Activated CD4-positive, alpha-beta memory T cell treated with anti-CD3 and anti-CD28 coated beads for 36 hours (primary cell): ENCODE measurements at regions of chr1 and their contacts with region 1.

Region 1: GRCh38 chr1:100351095-100351891 is 1.0 kb upstream of the CDC14A start:
- DNase-seq: peak; percentile 94
- H3K4me3 Mint-ChIP-seq: peak overlapping the region; percentile 98
- H3K27ac Mint-ChIP-seq: peak overlapping the region; percentile 97
- H3K4me1 Mint-ChIP-seq: peaks cover 30% of the 10 kb centered on the region
- H3K27me3 Mint-ChIP-seq: no peaks in the 10 kb centered on the region

Region 2: DNA sequence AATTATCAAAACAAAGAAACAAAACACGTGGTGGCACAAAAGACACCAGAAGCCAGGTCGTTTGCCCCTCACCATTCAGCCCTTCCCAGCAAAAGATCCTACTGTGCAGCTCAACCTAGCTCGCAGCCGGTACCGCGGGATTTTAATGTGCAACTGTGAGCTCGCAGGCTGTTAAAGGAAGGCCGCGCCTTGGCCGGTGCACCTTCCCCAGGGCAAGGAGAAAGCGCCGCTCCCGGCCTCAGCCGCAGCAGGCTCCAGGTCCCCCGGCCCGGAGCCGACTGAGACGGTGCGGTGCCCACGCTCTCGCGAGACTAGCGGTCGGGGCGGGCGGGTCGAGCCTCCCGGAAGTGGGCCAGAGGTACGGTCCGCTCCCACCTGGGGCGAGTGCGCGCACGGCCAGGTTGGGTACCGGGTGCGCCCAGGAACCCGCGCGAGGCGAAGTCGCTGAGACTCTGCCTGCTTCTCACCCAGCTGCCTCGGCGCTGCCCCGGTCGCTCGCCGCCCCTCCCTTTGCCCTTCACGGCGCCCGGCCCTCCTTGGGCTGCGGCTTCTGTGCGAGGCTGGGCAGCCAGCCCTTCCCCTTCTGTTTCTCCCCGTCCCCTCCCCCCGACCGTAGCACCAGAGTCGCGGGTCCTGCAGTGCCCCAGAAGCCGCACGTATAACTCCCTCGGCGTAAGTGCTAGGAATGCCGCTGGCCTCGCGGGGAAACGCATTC is 501.4 kb before region 1 on chr1 and contains the start of gene AGL:
- CTCF ChIA-PET with region 1: no interaction called
- POLR2A ChIA-PET with region 1: no interaction called
- intact Hi-C with region 1: loop called (anchors 10 kb)
- DNase-seq: peak; percentile 92
- H3K4me3 Mint-ChIP-seq: peak within 1 kb of the TSS; percentile 94
- H3K27ac Mint-ChIP-seq: peak within 1 kb of the TSS; percentile 82
- H3K4me1 Mint-ChIP-seq: peaks cover 27% of the 10 kb centered on the region
- H3K27me3 Mint-ChIP-seq: no peaks in the 10 kb centered on the region
- total RNA-seq, gene AGL: 19.0 to 19.7 TPM

Region 3: DNA sequence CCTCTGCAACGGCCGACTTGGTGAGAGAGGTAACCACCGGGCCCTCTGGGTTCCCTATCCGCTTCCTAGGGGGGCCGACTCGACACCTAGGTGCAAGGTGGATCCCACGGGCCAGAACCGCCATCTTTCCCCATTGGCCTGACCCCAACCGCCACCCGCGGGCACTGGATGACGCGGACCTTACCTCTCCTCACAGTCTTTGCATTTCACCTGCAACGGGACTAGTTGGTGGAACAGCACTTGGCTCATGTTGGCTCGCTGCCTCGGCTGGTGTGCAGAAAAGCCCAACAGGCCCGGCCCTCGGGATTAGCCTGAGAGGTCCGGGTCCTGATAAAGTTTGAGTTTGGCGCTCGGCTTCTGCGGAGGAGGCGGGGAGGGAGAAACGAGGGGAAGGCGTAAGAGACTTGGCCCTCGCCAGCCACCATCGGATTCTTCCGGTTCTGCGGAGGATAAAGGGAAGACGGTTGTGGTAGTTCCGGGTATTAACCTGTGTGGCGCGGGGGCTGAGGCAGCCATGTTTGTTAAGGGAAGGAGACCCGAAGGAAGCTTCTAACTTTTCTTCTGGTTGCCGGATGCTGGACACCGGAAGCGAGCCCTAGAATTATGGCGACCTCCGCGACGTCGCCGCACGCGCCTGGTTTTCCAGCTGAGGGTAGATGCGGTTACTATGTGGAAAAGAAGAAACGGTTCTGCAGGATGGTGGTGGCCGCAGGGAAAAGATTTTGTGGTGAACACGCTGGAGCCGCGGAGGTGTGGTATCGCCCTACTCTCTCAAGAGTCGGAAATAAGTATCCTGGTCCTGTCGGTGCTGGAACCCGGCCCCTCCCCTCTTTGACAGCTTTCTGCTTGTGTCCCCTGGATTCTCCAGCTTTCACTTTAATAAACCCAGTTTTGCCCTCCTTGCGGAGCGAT is 218.5 kb before region 1 on chr1 and contains the starts of genes SASS6 and TRMT13:
- CTCF ChIA-PET with region 1: no interaction called
- POLR2A ChIA-PET with region 1: no interaction called
- intact Hi-C with region 1: loop called (anchors 1 kb)
- DNase-seq: peak; percentile 97
- H3K4me3 Mint-ChIP-seq: peak within 1 kb of the TSS; percentile 96
- H3K27ac Mint-ChIP-seq: peak within 1 kb of the TSS; percentile 93
- H3K4me1 Mint-ChIP-seq: peaks cover 39% of the 10 kb centered on the region
- H3K27me3 Mint-ChIP-seq: no peaks in the 10 kb centered on the region
- total RNA-seq, gene SASS6: 11.5 to 12.0 TPM
- total RNA-seq, gene TRMT13: 17.5 TPM

Region 4: GRCh38 chr1:100306735-100307313 is 44.5 kb before region 1 on chr1:
- CTCF ChIA-PET with region 1: no interaction called
- POLR2A ChIA-PET with region 1: interaction called, 3 read pairs
- intact Hi-C with region 1: loop called (anchors 2 kb)
- DNase-seq: no peak
- H3K4me3 Mint-ChIP-seq: no peak overlapping the region
- H3K27ac Mint-ChIP-seq: no peak overlapping the region
- H3K4me1 Mint-ChIP-seq: peaks cover 20% of the 10 kb centered on the region
- H3K27me3 Mint-ChIP-seq: no peaks in the 10 kb centered on the region

Region 5: DNA sequence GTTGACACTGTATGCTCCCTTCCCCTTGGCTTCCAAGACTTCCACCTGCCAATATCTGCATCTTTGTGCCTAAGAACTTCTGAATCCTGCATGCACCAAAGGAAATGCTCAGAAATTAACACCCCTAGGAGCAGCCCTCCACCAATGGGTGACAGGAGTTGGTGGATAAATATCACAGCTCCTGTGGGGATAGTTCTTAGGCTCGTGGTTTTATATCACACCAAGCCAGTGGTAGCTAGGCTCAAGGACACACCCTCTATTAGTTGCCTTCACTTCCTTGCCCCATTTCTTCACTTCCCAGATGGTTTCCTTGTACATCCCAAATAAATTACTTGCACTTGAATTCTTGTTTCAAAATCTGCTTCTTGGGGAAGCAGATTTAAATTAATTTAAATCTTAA is 15.9 kb before region 1 on chr1:
- CTCF ChIA-PET with region 1: no interaction called
- POLR2A ChIA-PET with region 1: no interaction called
- intact Hi-C with region 1: no loop called
- DNase-seq: no peak
- H3K4me3 Mint-ChIP-seq: no peak overlapping the region
- H3K27ac Mint-ChIP-seq: no peak overlapping the region
- H3K4me1 Mint-ChIP-seq: no peaks in the 10 kb centered on the region
- H3K27me3 Mint-ChIP-seq: no peaks in the 10 kb centered on the region

Region 6: DNA sequence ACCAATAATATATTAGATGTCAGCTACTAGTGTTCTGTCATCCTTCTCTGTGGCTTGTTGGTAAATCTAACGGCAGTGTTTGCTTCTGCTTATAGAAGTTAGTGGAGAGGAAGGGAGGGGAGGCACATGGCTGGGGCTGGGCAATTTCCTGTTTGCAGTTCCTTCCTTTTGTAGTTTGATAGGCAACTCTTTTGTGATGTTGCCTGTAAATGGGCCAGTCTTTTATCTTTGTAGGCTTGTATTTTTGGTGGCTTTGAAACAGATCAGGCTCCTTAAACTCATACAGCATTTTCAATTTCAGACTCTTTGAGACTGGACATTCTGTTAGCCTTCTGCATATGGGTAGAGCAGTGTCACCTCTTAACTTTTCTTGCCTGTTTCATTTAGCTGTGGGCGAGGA is 49.1 kb after region 1 on chr1:
- CTCF ChIA-PET with region 1: interaction called, 6 read pairs
- POLR2A ChIA-PET with region 1: interaction called, 12 read pairs
- intact Hi-C with region 1: loop called (anchors 1 kb)
- DNase-seq: peak; percentile 67
- H3K4me3 Mint-ChIP-seq: peak overlapping the region; percentile 53
- H3K27ac Mint-ChIP-seq: peak overlapping the region; percentile 91
- H3K4me1 Mint-ChIP-seq: peaks cover 83% of the 10 kb centered on the region
- H3K27me3 Mint-ChIP-seq: no peaks in the 10 kb centered on the region

Region 7: DNA sequence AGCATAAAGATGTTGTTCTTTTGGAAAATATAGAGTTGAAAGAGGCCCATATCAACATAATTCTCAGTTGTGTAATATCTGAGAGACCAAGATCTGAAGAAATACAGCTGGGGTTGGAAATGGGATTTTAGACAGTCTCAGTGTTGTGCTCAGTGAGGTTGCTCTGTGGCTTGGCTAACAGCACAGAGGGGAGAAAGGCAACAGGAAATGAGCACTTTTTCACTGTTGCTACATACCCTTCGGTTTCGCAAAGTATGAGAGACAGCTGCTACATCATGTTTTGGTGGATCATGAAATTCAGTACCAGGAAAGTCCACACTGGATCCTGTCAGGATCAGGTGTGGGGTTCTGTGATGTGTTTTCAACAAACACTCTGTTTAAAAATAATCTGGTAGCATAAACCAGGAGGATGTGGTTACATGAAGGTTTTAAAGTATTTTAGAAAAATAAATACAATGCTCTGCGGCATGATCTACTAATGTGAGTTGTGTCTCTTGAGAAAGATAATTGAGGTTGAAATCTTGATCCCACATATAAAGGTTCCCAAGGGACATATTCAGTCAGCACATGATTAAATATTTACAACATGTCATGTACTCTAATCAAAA is 179.7 kb after region 1 on chr1:
- CTCF ChIA-PET with region 1: no interaction called
- POLR2A ChIA-PET with region 1: no interaction called
- intact Hi-C with region 1: loop called (anchors 10 kb)
- DNase-seq: peak; percentile 33
- H3K4me3 Mint-ChIP-seq: no peak overlapping the region
- H3K27ac Mint-ChIP-seq: no peak overlapping the region
- H3K4me1 Mint-ChIP-seq: peaks cover 39% of the 10 kb centered on the region
- H3K27me3 Mint-ChIP-seq: peaks cover 10% of the 10 kb centered on the region